A549 (cell line): ENCODE measurements at regions of chr20 and their contacts with region 1.

Region 1: GRCh38 chr20:60057123-60057801 is 99.0 kb downstream of the CDH26 start:
- DNase-seq: peak; percentile 56 to 68
- ATAC-seq: peak; percentile 76 to 88
- H3K4me3 ChIP-seq: no peak overlapping the region
- H3K27ac ChIP-seq: no peak overlapping the region
- H3K4me1 ChIP-seq: no peaks in the 10 kb centered on the region
- CTCF ChIP-seq: peak; percentile 81
- EP300 ChIP-seq: no peak
- POLR2A ChIP-seq: no peak
- RAD21 ChIP-seq: peak; percentile 85 to 86

Region 2: GRCh38 chr20:59948828-59949720 is 108.2 kb before region 1 on chr20:
- CTCF ChIA-PET with region 1: interaction called, 11 read pairs
- POLR2A ChIA-PET with region 1: no interaction called
- DNase-seq: peak in 1 of 2 experiments; percentile 57
- ATAC-seq: peak; percentile 66 to 69; a peak in 4 of 6 replicates
- H3K4me3 ChIP-seq: no peak overlapping the region
- H3K27ac ChIP-seq: no peak overlapping the region
- H3K4me1 ChIP-seq: 0 out of 3 replicates have a peak, but pooled peaks cover 3% of the 10 kb centered on the region
- CTCF ChIP-seq: peak; percentile 72
- EP300 ChIP-seq: no peak
- POLR2A ChIP-seq: no peak
- RAD21 ChIP-seq: peak; percentile 63 to 67

Region 3: DNA sequence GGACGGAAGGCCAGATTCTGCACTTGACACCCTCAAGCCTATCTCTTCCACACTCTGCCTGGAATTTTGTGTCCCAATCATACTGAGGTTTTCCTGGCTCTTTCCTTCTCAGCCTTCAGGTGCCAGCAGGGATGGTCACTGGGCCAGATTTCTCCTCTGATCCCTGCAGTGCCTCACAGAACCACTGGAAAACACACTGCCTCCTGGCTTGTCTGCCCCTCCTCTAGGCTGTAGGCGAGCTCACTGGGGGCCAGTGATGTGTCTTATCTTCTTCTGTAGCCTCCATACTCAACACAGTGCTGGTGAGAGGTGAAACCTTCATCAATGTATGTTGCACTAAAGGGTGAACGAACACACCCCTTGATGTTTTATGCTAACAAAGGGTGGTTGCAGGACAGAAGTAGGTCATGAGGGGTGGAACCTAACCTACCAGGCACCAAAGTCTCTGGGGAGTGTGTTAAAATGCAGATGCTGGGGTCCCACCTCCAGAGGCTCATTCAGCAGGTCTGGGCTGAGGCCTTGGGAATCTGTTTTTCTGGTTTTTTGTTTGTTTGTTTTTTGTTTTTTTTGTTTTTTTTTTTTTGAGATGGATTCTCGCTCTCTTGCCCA is 18.8 kb before region 1 on chr20:
- CTCF ChIA-PET with region 1: interaction called, 15 read pairs
- POLR2A ChIA-PET with region 1: no interaction called
- DNase-seq: no peak
- ATAC-seq: peak in 1 of 2 experiments; percentile 42; a peak in 2 of 6 replicates
- H3K4me3 ChIP-seq: no peak overlapping the region
- H3K27ac ChIP-seq: no peak overlapping the region
- H3K4me1 ChIP-seq: peaks cover 24% of the 10 kb centered on the region
- CTCF ChIP-seq: no peak
- EP300 ChIP-seq: no peak
- POLR2A ChIP-seq: no peak
- RAD21 ChIP-seq: no peak

Region 4: DNA sequence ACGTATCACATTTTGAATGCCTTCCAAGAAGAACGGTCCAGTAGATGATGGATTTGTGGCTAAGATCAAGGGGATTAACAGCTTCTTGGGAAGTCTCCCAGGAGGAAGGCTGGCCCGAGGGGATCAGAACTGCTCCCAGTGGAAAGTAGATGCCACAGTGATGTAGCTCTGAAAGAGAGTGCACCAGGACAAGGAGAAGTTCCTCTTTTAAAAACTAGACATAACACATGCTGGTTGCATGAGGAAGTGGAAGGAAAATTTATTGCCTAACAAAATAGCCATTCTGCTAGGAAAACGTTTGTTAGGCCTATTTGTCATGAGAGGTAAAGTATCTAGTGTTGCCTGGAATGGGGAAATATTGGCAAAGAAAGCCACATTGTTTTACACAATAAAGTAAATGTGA is 11.2 kb before region 1 on chr20:
- CTCF ChIA-PET with region 1: interaction called, 36 read pairs
- POLR2A ChIA-PET with region 1: no interaction called
- DNase-seq: no peak
- ATAC-seq: no peak
- H3K4me3 ChIP-seq: no peak overlapping the region
- H3K27ac ChIP-seq: no peak overlapping the region
- H3K4me1 ChIP-seq: peaks cover 9% of the 10 kb centered on the region
- CTCF ChIP-seq: no peak
- EP300 ChIP-seq: no peak
- POLR2A ChIP-seq: no peak
- RAD21 ChIP-seq: no peak

Region 5: DNA sequence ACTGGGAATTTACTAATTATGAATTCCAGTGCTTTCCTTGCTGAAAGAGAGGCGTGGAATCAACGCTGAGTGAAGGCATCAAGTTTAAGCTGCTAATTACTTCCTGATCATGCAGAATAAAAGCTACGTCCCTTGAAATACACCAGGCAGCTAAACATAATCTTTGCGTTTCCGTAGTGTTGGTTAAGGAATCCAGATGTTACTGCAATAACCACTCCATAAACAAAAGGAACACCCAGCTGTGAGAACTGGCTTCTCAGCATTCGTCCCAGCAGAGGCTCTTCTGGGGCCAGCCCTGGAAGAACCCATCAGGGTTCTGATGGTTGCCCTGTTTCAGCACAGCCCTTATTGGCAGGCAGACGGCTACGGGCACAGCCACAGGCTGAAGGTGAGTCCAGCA is 12.4 kb after region 1 on chr20:
- CTCF ChIA-PET with region 1: interaction called, 26 read pairs
- POLR2A ChIA-PET with region 1: no interaction called
- DNase-seq: no peak
- ATAC-seq: no peak
- H3K4me3 ChIP-seq: no peak overlapping the region
- H3K27ac ChIP-seq: no peak overlapping the region
- H3K4me1 ChIP-seq: no peaks in the 10 kb centered on the region
- CTCF ChIP-seq: no peak
- EP300 ChIP-seq: no peak
- POLR2A ChIP-seq: no peak
- RAD21 ChIP-seq: no peak

Region 6: DNA sequence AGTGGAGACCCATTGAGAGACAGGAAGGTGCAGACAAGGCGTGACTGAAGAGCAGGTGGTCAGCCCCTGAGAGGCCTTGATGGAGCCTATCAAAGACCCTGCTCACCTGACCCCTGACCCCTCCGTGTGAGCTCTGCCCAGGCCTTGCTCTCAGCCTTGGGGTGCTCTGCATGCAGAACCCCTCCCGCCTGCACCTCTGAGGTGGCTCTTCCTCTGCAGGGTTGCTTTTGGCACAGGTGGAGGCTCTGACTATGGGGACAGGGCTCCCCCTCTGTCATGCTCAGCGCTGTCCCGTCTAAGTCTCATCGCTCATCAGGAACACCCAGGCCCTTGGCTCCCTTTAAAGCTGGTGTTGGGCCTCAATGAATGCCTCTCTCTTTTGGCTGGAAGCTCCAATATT is 22.1 kb after region 1 on chr20:
- CTCF ChIA-PET with region 1: interaction called, 17 read pairs
- POLR2A ChIA-PET with region 1: no interaction called
- DNase-seq: no peak
- ATAC-seq: no peak
- H3K4me3 ChIP-seq: no peak overlapping the region
- H3K27ac ChIP-seq: no peak overlapping the region
- H3K4me1 ChIP-seq: no peaks in the 10 kb centered on the region
- CTCF ChIP-seq: no peak
- EP300 ChIP-seq: no peak
- POLR2A ChIP-seq: no peak
- RAD21 ChIP-seq: no peak

Region 7: DNA sequence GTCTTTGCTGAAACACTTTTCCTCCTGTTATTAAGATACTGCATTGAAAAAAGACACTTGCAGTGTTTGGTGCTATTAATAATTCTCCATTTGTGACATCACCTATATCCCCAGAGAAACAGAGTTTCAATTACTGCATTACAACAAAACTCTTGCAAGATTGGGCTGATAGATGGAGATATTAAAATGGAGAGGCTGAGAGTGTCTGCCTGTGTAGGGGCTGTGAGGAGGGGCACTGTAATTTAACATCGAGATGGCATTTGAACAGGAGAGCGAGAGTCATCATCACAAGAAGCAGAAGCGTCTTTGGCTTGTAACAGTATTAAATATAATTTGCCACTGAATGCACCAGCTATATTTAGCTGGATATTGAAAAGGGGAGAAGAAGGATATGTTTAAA is 217.5 kb after region 1 on chr20:
- CTCF ChIA-PET with region 1: no interaction called
- POLR2A ChIA-PET with region 1: no interaction called
- DNase-seq: no peak
- ATAC-seq: no peak
- H3K4me3 ChIP-seq: no peak overlapping the region
- H3K27ac ChIP-seq: no peak overlapping the region
- H3K4me1 ChIP-seq: no peaks in the 10 kb centered on the region
- CTCF ChIP-seq: no peak
- EP300 ChIP-seq: no peak
- POLR2A ChIP-seq: no peak
- RAD21 ChIP-seq: no peak

Region 8: GRCh38 chr20:60292001-60292520 is 234.8 kb after region 1 on chr20:
- CTCF ChIA-PET with region 1: no interaction called
- POLR2A ChIA-PET with region 1: no interaction called
- DNase-seq: no peak
- ATAC-seq: no peak
- H3K4me3 ChIP-seq: no peak overlapping the region
- H3K27ac ChIP-seq: no peak overlapping the region
- H3K4me1 ChIP-seq: no peaks in the 10 kb centered on the region
- CTCF ChIP-seq: no peak
- EP300 ChIP-seq: no peak
- POLR2A ChIP-seq: no peak
- RAD21 ChIP-seq: no peak

Region 9: GRCh38 chr20:61896058-61896961 is 1839.0 kb after region 1 on chr20:
- CTCF ChIA-PET with region 1: interaction called, 10 read pairs
- POLR2A ChIA-PET with region 1: no interaction called
- DNase-seq: peak; percentile 32 to 79
- ATAC-seq: peak; percentile 80 to 94
- H3K4me3 ChIP-seq: no peak overlapping the region
- H3K27ac ChIP-seq: no peak overlapping the region
- H3K4me1 ChIP-seq: no peaks in the 10 kb centered on the region
- CTCF ChIP-seq: peak; percentile 71
- EP300 ChIP-seq: no peak
- POLR2A ChIP-seq: no peak
- RAD21 ChIP-seq: peak; percentile 76 to 80